ENCODE measurements at regions of chr20 and their contacts with region 1.

Region 1: DNA sequence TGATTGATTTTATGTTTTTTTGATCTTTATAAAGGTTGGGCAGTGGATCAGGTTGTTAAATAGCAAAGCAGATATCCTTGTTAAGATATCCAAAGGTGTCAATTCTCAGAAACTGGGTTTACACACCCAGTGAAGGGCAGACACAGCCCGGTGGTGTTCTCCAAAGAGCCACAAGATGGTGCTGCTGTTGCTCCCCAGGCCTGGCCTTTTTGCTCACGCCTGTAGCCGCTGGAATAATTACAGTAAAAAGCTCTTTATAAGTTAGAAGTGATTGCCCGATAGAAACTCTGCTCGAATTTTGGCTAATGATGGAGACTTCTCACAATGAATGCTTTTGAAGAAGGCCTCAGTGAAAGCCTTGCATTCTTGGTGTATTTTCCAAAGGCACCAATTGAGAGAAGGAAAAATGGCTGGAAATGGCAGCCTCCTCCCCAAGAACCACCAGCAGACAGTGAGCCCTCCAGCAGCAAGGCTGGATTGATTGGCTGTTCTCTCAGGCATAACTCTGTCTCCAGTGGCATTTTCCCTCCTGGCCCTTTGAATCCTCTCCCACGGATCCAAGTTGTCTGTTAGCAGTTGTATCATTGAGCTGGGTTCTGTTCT is 120.5 kb upstream of the CHD6 start:
- DNase-seq: peak; percentile 71
- ATAC-seq: peak; percentile 85
- H3K4me3 Mint-ChIP-seq: no peak overlapping the region
- H3K27ac Mint-ChIP-seq: no peak overlapping the region
- H3K4me1 Mint-ChIP-seq: peaks cover 11% of the 10 kb centered on the region
- H3K27me3 Mint-ChIP-seq: no peaks in the 10 kb centered on the region
- CTCF ChIP-seq: peak; percentile 68

Region 2: GRCh38 chr20:41701588-41702348 is 36.9 kb before region 1 on chr20:
- CTCF ChIA-PET with region 1: interaction called, 12 read pairs
- POLR2A ChIA-PET with region 1: no interaction called
- DNase-seq: peak; percentile 21
- ATAC-seq: peak; percentile 84
- H3K4me3 Mint-ChIP-seq: no peak overlapping the region
- H3K27ac Mint-ChIP-seq: peak overlapping the region; percentile 58; the same call in 1 of the 2 replicates
- H3K4me1 Mint-ChIP-seq: peaks cover 13% of the 10 kb centered on the region
- H3K27me3 Mint-ChIP-seq: no peaks in the 10 kb centered on the region
- CTCF ChIP-seq: no peak

Region 3: GRCh38 chr20:41722236-41722635 is 16.5 kb before region 1 on chr20:
- CTCF ChIA-PET with region 1: interaction called, 13 read pairs
- POLR2A ChIA-PET with region 1: no interaction called
- DNase-seq: no peak
- ATAC-seq: no peak
- H3K4me3 Mint-ChIP-seq: no peak overlapping the region
- H3K27ac Mint-ChIP-seq: no peak overlapping the region
- H3K4me1 Mint-ChIP-seq: no peaks in the 10 kb centered on the region
- H3K27me3 Mint-ChIP-seq: peaks cover 2% of the 10 kb centered on the region; the same call in 1 of the 2 replicates
- CTCF ChIP-seq: no peak

Region 4: DNA sequence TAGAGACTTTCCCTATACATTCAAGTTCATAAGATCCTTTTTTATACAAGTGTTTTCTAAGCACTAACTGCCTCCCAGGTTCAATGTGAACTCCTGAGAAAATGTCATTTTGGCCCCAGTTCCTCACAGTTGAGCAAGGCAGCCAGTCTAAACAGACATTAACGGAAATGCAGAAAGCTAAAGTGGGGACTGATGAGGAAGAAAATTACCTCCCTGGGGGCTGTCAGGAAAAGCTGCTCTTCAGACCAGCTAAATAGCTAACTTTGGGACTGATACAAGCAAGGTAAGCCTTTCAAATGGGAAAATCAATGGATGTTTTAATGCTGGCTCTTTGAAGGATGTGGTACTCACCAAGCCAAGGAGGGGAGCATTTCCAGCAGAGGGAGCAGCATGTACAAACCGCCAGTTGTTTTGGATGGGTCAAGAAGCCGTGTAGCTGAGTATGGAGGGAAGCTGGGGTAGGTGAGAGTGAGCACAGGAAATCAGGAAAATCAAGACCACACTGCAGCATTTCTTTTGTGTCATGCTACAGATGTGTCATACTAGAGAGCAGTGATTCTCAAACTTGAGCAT is 60.3 kb after region 1 on chr20:
- CTCF ChIA-PET with region 1: interaction called, 24 read pairs
- POLR2A ChIA-PET with region 1: interaction called, 3 read pairs
- DNase-seq: no peak
- ATAC-seq: peak; percentile 69
- H3K4me3 Mint-ChIP-seq: no peak overlapping the region
- H3K27ac Mint-ChIP-seq: no peak overlapping the region
- H3K4me1 Mint-ChIP-seq: peaks cover 19% of the 10 kb centered on the region
- H3K27me3 Mint-ChIP-seq: peaks cover 2% of the 10 kb centered on the region; the same call in 1 of the 2 replicates
- CTCF ChIP-seq: no peak

Region 5: DNA sequence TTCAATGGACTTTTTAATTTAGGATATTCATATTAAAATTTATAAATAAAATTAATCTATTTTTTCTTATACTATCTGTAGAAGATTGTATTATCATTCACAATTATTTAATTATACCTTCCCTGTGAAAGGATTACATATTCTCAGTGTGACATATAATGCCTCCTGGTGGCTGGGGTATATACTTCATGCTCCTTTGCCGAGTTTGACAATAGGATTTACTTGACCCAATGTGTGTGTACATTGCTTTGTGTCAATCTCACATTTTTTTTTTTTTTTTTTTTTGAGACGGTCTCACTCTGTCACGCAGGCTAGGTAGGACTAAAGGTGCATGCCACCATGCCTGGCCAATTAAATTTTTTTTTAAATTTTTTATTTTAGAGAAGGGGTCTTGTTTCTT is 109.5 kb after region 1 on chr20:
- CTCF ChIA-PET with region 1: interaction called, 14 read pairs
- POLR2A ChIA-PET with region 1: no interaction called
- DNase-seq: no peak
- ATAC-seq: no peak
- H3K4me3 Mint-ChIP-seq: no peak overlapping the region
- H3K27ac Mint-ChIP-seq: no peak overlapping the region
- H3K4me1 Mint-ChIP-seq: no peaks in the 10 kb centered on the region
- H3K27me3 Mint-ChIP-seq: no peaks in the 10 kb centered on the region
- CTCF ChIP-seq: 0 out of 2 replicates have a peak, but pooled peaks have one; percentile 25

Region 6: DNA sequence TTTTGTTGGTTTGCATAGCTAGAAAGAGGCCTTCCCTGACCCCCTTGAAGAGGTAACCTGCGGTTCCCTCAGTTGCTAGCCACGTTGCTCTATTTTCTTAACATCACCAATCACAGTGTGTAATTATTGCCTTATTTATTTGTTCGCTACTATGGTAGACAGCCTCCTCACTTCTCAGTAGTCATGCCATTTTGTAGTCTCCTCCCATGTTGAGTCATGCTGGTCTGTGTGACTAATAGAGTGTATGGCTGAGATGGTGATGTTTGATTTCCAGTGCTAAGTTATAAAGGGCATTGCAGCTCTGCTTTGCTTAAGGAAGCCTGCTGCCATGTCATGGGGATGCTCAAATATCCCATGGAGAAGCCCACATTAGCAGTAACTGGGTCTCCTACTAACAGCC is 116.1 kb after region 1 on chr20:
- CTCF ChIA-PET with region 1: interaction called, 14 read pairs
- POLR2A ChIA-PET with region 1: no interaction called
- DNase-seq: no peak
- ATAC-seq: no peak
- H3K4me3 Mint-ChIP-seq: no peak overlapping the region
- H3K27ac Mint-ChIP-seq: peak overlapping the region; percentile 13; the same call in 1 of the 2 replicates
- H3K4me1 Mint-ChIP-seq: peaks cover 39% of the 10 kb centered on the region
- H3K27me3 Mint-ChIP-seq: peaks cover 2% of the 10 kb centered on the region; the same call in 1 of the 2 replicates
- CTCF ChIP-seq: no peak

Region 7: DNA sequence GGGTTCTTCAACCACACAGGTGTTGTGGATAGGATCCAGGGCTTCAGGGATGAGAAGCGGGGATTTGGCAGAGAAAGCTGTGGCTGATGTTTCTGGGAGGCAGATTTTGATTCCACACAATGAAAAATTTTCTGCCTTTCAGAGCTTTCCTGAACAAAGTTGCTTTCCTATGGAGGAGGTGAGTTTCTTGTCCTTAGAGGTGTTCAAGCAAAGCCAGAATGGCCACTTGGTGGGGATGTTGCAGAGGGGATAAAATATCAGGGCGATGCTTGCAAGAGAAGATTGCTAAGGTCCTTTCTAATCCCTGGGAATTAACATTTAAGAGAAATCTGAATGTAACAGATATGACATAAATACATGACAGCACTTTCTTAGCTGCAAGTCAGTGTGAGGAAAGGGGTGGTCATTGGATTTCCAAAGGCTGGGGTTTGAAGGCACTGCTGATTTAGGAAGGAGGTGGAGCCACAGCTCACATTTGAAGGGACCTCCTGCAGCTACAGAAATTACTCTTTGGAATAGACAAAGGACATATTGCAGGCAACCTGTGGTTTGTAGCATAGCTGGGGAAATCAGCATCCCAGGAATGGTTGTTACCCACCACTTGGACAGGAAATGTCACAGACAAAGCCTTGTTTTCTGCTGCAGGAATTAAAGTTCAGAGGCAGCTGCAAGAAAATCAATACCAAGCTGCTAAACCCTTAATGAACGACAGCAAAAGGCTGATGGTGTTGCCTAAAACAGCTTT is 150.6 kb after region 1 on chr20:
- CTCF ChIA-PET with region 1: interaction called, 15 read pairs
- POLR2A ChIA-PET with region 1: no interaction called
- DNase-seq: peak; percentile 24
- ATAC-seq: peak; percentile 80
- H3K4me3 Mint-ChIP-seq: no peak overlapping the region
- H3K27ac Mint-ChIP-seq: peak overlapping the region; percentile 81
- H3K4me1 Mint-ChIP-seq: peaks cover 36% of the 10 kb centered on the region
- H3K27me3 Mint-ChIP-seq: no peaks in the 10 kb centered on the region
- CTCF ChIP-seq: no peak